Panc1 (cell line): ENCODE measurements at regions of chr16 and their contacts with region 1.

Region 1: GRCh38 chr16:17397499-17397891 is 73.3 kb downstream of the XYLT1 start:
- DNase-seq: no peak
- ATAC-seq: no peak
- H3K4me3 ChIP-seq: no peak overlapping the region
- H3K27ac ChIP-seq: no peak overlapping the region
- H3K4me1 ChIP-seq: no peaks in the 10 kb centered on the region
- H3K27me3 ChIP-seq: no peaks in the 10 kb centered on the region
- CTCF ChIP-seq: no peak

Region 2: GRCh38 chr16:17345043-17345442 is 52.5 kb before region 1 on chr16:
- CTCF ChIA-PET with region 1: no interaction called
- POLR2A ChIA-PET with region 1: interaction called, 11 read pairs
- in situ Hi-C with region 1: no loop called
- intact Hi-C with region 1: no loop called
- DNase-seq: no peak
- ATAC-seq: no peak
- H3K4me3 ChIP-seq: no peak overlapping the region
- H3K27ac ChIP-seq: no peak overlapping the region
- H3K4me1 ChIP-seq: no peaks in the 10 kb centered on the region
- H3K27me3 ChIP-seq: no peaks in the 10 kb centered on the region
- CTCF ChIP-seq: no peak

Region 3: GRCh38 chr16:17544785-17545184 is 147.3 kb after region 1 on chr16:
- CTCF ChIA-PET with region 1: no interaction called
- POLR2A ChIA-PET with region 1: no interaction called
- in situ Hi-C with region 1: no loop called
- intact Hi-C with region 1: no loop called
- DNase-seq: no peak
- ATAC-seq: no peak
- H3K4me3 ChIP-seq: no peak overlapping the region
- H3K27ac ChIP-seq: no peak overlapping the region
- H3K4me1 ChIP-seq: no peaks in the 10 kb centered on the region
- H3K27me3 ChIP-seq: no peaks in the 10 kb centered on the region
- CTCF ChIP-seq: peak; percentile 59